ENCODE measurements at regions of chr4 and their contacts with region 1.

Region 1: DNA sequence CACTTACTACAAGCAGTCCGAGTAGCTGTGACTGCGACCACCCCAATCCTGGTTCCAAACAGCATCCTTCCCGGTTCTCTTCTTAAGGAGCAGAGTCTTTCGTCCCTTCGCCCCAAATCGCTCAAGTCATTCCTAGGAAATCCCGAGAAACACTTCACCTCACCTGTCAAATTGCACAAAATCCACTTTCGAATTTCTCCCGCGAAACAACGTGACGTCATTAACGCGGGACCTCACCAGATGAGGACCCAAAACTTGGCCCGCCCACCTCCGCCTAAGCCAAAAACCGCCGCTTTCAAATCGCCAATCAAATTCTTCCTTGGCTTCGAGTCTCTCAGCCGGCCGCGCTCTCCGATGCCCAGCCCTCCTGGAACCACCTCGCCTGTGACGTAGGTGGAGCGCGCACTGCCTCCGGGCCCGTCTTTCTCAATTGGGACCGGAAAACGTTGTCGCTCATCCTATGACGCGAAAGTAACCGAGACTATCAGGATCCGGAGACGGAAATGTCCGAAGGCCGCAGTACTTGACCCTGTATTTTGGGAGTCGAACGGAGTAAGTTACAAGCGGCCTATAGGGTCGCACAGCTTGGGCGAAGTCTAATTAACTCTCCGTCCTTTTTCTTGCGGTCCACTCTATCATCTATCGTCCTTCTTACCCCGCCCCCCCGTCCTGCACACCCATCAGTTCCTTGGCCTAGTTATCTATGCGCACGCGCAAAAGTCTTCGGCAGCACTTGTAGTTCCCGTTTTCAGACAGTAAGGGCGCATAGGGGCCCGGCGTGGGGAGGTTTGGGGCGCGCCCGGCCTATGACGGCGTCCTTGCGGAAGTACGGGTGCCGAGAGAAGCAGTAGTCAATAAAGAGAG is at the starts of genes LARP7 and ZGRF1:
- DNase-seq: peak; percentile 95 to 100 (median 98)
- ATAC-seq: peak; percentile 86
- H3K4me3 ChIP-seq: peak within 1 kb of the TSS; percentile 74 to 76
- H3K4me3 Mint-ChIP-seq: no peak within 1 kb of the TSS
- H3K27ac ChIP-seq: peak within 1 kb of the TSS; percentile 97 to 99
- H3K27ac Mint-ChIP-seq: no peak within 1 kb of the TSS
- H3K4me1 ChIP-seq: peaks cover 19% of the 10 kb centered on the region
- H3K4me1 Mint-ChIP-seq: peaks cover 17% of the 10 kb centered on the region
- H3K27me3 ChIP-seq: no peaks in the 10 kb centered on the region
- H3K27me3 Mint-ChIP-seq: no peaks in the 10 kb centered on the region
- CTCF ChIP-seq: peak; percentile 89
- total RNA-seq, gene LARP7: 46.7 to 47.2 TPM
- total RNA-seq, gene ZGRF1: 7.9 to 9.1 TPM

Region 2: GRCh38 chr4:112119353-112119783 is 517.6 kb before region 1 on chr4:
- CTCF ChIA-PET with region 1: no interaction called
- POLR2A ChIA-PET with region 1: no interaction called
- intact Hi-C with region 1: no loop called
- DNase-seq: peak in 1 of 9 experiments; percentile 7
- ATAC-seq: no peak
- H3K4me3 ChIP-seq: no peak overlapping the region
- H3K4me3 Mint-ChIP-seq: no peak overlapping the region
- H3K27ac ChIP-seq: no peak overlapping the region
- H3K27ac Mint-ChIP-seq: no peak overlapping the region
- H3K4me1 ChIP-seq: no peaks in the 10 kb centered on the region
- H3K4me1 Mint-ChIP-seq: peaks cover 6% of the 10 kb centered on the region
- H3K27me3 ChIP-seq: no peaks in the 10 kb centered on the region
- H3K27me3 Mint-ChIP-seq: no peaks in the 10 kb centered on the region
- CTCF ChIP-seq: no peak

Region 3: GRCh38 chr4:112145326-112145819 is 491.5 kb before region 1 on chr4 and contains the start of gene FAM241A:
- CTCF ChIA-PET with region 1: no interaction called
- POLR2A ChIA-PET with region 1: no interaction called
- intact Hi-C with region 1: loop called (anchors 1 kb)
- DNase-seq: peak; percentile 84 to 95 (median 90)
- ATAC-seq: peak; percentile 96
- H3K4me3 ChIP-seq: peak within 1 kb of the TSS; percentile 75 to 78
- H3K4me3 Mint-ChIP-seq: peak within 1 kb of the TSS; percentile 98
- H3K27ac ChIP-seq: peak within 1 kb of the TSS; percentile 69
- H3K27ac Mint-ChIP-seq: peak within 1 kb of the TSS; percentile 94
- H3K4me1 ChIP-seq: peaks cover 10% of the 10 kb centered on the region
- H3K4me1 Mint-ChIP-seq: peaks cover 29% of the 10 kb centered on the region
- H3K27me3 ChIP-seq: no peaks in the 10 kb centered on the region
- H3K27me3 Mint-ChIP-seq: no peaks in the 10 kb centered on the region
- CTCF ChIP-seq: no peak
- total RNA-seq, gene FAM241A: 0.67 to 0.90 TPM

Region 4: DNA sequence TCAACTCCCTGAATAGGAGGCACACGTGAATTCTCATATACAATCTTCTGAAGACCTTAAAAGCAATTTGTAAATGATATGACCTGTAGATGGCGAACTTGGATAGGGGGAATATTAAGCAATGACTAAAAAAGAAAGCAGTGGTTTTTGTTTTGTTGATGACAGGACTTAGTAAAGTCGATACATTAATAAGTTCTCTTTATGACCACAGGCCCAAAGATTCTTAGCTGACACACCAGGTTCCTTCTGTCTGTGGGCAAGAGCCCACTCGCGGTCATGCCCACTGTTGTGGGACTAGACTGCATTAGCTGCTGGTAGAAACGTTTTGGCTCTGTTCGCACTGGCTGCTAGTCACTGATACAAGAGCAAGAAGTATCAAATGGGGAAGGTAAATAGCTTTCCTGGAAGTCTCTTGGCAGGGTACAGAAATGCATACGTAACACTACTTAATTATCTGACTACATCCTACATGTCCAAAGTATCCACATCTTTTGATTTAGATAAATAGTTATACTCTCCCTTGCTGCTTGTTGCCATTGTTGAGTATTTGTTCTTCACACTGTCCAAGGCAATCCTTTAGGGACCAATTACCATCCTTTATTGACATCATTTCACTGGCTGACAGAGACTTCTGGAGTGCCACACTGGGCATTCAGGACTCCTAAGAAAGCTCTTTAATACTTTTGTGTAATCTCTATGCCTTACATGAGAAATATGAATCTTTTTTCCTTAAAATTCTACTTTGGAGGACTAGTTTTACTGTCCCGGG is 308.8 kb before region 1 on chr4:
- CTCF ChIA-PET with region 1: no interaction called
- POLR2A ChIA-PET with region 1: no interaction called
- intact Hi-C with region 1: loop called in 1 of 2 experiments (anchors 10 kb)
- DNase-seq: peak in 2 of 9 experiments; percentile 61 to 68
- ATAC-seq: peak; percentile 52
- H3K4me3 ChIP-seq: peak overlapping the region in 1 of 2 experiments; percentile 26
- H3K4me3 Mint-ChIP-seq: peak overlapping the region; percentile 10
- H3K27ac ChIP-seq: no peak overlapping the region
- H3K27ac Mint-ChIP-seq: no peak overlapping the region
- H3K4me1 ChIP-seq: no peaks in the 10 kb centered on the region
- H3K4me1 Mint-ChIP-seq: no peaks in the 10 kb centered on the region
- H3K27me3 ChIP-seq: no peaks in the 10 kb centered on the region
- H3K27me3 Mint-ChIP-seq: no peaks in the 10 kb centered on the region
- CTCF ChIP-seq: peak; percentile 61

Region 5: GRCh38 chr4:112616984-112617383 is 19.9 kb before region 1 on chr4:
- CTCF ChIA-PET with region 1: no interaction called
- POLR2A ChIA-PET with region 1: no interaction called
- intact Hi-C with region 1: no loop called
- DNase-seq: no peak
- ATAC-seq: no peak
- H3K4me3 ChIP-seq: no peak overlapping the region
- H3K4me3 Mint-ChIP-seq: no peak overlapping the region
- H3K27ac ChIP-seq: no peak overlapping the region
- H3K27ac Mint-ChIP-seq: no peak overlapping the region
- H3K4me1 ChIP-seq: no peaks in the 10 kb centered on the region
- H3K4me1 Mint-ChIP-seq: no peaks in the 10 kb centered on the region
- H3K27me3 ChIP-seq: no peaks in the 10 kb centered on the region
- H3K27me3 Mint-ChIP-seq: no peaks in the 10 kb centered on the region
- CTCF ChIP-seq: no peak

Region 6: DNA sequence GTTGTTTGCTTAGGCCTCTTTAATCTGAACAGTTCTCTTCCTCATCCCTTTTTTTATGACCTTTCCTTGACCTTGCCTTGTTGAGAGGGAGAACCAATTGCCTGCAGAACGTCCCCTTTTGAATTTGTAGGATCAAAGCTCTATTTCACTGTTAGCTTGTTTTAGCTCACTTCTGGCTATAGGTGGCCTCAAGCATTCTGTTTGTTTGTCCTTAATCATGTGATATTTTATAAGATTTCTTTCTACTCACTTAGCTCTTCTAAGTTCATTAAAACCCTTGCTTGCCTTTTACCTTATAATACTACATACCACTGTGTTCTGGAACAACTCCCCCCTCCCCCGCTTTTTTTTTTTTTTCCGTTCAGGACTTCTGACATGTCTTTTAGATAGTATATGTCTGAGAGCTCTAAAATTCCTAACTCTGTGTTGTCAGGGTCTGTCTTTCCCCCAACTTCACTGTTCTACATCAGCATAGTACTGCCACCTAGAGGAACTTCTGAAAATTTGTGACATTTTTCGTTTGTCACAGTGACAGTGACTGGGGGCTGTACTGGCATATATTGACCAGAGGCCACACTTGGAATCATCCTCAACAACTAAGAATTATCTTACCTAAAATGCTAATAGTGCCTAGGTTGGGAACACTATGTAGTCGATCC is 128.5 kb after region 1 on chr4:
- CTCF ChIA-PET with region 1: interaction called, 10 read pairs
- POLR2A ChIA-PET with region 1: no interaction called
- intact Hi-C with region 1: loop called in 1 of 2 experiments (anchors 2 kb)
- DNase-seq: peak in 2 of 9 experiments; percentile 18 to 32
- ATAC-seq: no peak
- H3K4me3 ChIP-seq: no peak overlapping the region
- H3K4me3 Mint-ChIP-seq: no peak overlapping the region
- H3K27ac ChIP-seq: no peak overlapping the region
- H3K27ac Mint-ChIP-seq: no peak overlapping the region
- H3K4me1 ChIP-seq: no peaks in the 10 kb centered on the region
- H3K4me1 Mint-ChIP-seq: no peaks in the 10 kb centered on the region
- H3K27me3 ChIP-seq: no peaks in the 10 kb centered on the region
- H3K27me3 Mint-ChIP-seq: peaks cover 9% of the 10 kb centered on the region
- CTCF ChIP-seq: peak; percentile 42

Region 7: GRCh38 chr4:112889619-112890527 is 253.0 kb after region 1 on chr4:
- CTCF ChIA-PET with region 1: no interaction called
- POLR2A ChIA-PET with region 1: no interaction called
- intact Hi-C with region 1: no loop called
- DNase-seq: no peak
- ATAC-seq: no peak
- H3K4me3 ChIP-seq: no peak overlapping the region
- H3K4me3 Mint-ChIP-seq: no peak overlapping the region
- H3K27ac ChIP-seq: no peak overlapping the region
- H3K27ac Mint-ChIP-seq: no peak overlapping the region
- H3K4me1 ChIP-seq: no peaks in the 10 kb centered on the region
- H3K4me1 Mint-ChIP-seq: no peaks in the 10 kb centered on the region
- H3K27me3 ChIP-seq: no peaks in the 10 kb centered on the region
- H3K27me3 Mint-ChIP-seq: peaks cover 3% of the 10 kb centered on the region
- CTCF ChIP-seq: no peak

Region 8: DNA sequence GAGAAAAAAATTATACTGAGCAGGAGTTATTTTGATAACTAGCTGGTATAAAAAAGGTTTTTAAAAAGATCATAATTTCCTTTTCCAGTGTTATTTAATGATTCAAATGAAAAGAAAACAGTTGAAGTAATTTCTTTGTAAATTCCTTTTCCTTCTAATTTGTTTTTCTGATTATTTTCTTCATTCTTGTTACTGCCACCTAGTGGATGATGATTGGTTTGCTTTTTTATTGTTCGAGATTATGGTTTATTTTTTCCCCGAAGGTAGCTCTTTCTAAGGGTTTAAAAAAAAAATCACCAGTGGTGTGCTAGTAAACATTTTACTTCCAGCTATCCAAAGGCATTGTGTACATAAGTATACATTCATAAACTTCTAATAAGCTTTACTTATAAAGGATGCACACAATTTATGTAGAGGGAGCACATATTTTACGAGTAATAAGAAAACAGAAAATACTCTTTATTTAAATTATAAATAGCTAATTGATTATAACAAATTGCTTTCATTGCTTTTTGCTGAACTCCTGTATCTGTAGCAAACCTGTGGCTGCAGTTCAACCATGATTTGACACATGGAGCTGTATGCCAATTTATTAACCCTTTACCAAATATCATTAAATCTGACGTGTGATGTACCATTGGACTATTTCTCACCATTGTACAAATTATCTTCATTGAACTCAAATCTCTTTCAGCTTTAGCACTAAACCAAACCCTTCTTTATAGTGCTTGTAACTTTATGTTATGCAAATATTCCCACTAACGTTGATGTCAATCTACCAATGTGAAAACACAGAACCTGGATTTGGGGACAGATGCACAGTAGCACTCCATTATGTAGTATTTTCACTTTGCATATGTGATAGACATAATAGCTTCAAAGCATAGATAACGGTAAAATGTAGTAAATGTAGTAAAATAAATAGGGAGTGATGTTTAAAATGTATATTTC is 314.7 kb after region 1 on chr4:
- CTCF ChIA-PET with region 1: no interaction called
- POLR2A ChIA-PET with region 1: no interaction called
- intact Hi-C with region 1: loop called (anchors 5 kb)
- DNase-seq: peak in 2 of 9 experiments; percentile 1 to 5
- ATAC-seq: no peak
- H3K4me3 ChIP-seq: no peak overlapping the region
- H3K4me3 Mint-ChIP-seq: no peak overlapping the region
- H3K27ac ChIP-seq: no peak overlapping the region
- H3K27ac Mint-ChIP-seq: no peak overlapping the region
- H3K4me1 ChIP-seq: no peaks in the 10 kb centered on the region
- H3K4me1 Mint-ChIP-seq: no peaks in the 10 kb centered on the region
- H3K27me3 ChIP-seq: peaks cover 0 to 3% of the 10 kb centered on the region in 2 experiments
- H3K27me3 Mint-ChIP-seq: peaks cover 11% of the 10 kb centered on the region
- CTCF ChIP-seq: peak; percentile 58